H1 (cell line): ENCODE measurements at regions of chr1 and their contacts with region 1.

Region 1: DNA sequence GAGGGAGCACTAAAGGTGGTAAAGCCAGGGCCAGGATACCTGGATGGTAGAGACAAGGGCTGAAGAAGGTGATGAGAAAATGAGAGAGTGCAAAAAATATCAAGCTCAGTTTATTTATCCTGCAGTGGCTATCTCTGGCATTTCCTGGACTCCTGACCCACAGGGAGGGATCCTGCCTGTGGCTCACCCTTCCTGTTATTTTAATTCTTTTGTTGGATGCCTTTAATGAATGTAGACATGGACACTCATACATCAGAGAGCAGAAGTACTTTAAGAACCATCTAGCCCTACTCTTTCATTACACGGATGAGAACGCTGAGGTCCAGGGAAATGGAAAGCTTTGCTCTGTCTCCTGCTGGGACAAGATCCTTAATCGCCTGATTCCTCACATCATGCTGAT is 20.6 kb downstream of the JUN start:
- DNase-seq: no peak
- H3K4me3 ChIP-seq: no peak overlapping the region
- H3K27ac ChIP-seq: no peak overlapping the region
- H3K4me1 ChIP-seq: peaks cover 0 to 5% (median 0%) of the 10 kb centered on the region in 4 experiments; a peak in 1 of 7 replicates
- H3K27me3 ChIP-seq: no peaks in the 10 kb centered on the region
- CTCF ChIP-seq: no peak
- EP300 ChIP-seq: no peak
- POLR2A ChIP-seq: no peak
- RAD21 ChIP-seq: no peak

Region 2: DNA sequence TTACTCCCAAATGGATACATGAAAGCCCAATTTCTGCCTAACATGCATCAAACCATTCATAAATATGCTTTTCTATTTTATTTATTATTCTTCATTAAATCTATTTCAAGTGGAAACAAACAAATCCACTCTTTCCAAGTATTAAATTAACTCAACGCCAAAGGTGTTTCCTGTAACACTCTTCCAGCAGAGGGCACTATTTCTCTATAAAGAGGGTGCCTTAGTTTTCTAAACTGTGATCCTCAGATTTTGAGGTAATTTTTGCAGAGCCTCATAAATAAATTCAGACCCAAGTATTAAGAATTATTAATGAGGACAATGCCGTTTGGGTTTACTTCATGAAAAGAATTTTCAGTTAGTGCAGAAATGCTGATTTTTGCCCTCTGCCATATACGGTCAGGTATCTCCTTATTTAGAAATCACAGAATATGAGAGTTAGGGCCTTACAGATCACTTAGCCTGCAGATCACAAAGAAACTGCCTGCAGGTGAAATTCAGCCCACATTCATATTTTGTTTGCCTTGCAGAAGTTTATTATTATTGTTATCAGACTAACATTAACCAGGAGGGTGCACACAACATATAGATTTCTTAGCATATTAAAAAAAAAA is 23.3 kb before region 1 on chr1:
- CTCF ChIA-PET with region 1: interaction called, 34 read pairs
- POLR2A ChIA-PET with region 1: no interaction called
- DNase-seq: no peak
- H3K4me3 ChIP-seq: no peak overlapping the region
- H3K27ac ChIP-seq: no peak overlapping the region
- H3K4me1 ChIP-seq: no peaks in the 10 kb centered on the region
- H3K27me3 ChIP-seq: no peaks in the 10 kb centered on the region
- CTCF ChIP-seq: peak in 2 of 3 experiments; percentile 43 to 57; a peak in 2 of 4 replicates
- EP300 ChIP-seq: no peak
- POLR2A ChIP-seq: no peak
- RAD21 ChIP-seq: peak; percentile 88 to 89

Region 3: DNA sequence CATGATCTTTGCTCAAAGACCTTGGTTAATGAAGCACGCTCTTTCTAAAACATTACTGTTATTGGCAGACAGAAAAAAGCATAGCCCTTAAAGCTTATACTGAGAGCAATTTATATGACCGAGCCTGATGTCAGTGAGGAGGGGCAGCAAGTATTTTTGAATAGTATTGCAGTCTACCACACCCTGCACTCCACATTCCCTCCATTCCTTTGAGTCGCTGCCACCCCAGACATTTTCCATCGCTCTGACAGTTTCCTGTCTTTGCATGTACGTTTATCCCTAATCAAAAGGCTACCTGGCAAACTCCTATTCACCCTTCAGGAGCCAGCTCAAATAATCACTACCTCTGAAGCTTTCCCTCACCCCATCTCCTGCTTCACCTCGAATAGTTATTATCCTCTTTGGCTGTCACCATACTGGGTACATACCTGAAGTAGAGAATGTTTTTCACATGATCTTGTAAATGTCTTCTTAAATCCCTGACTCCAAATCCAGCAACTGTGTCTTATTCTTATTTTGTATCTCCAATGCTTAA is 26.2 kb after region 1 on chr1:
- CTCF ChIA-PET with region 1: no interaction called
- POLR2A ChIA-PET with region 1: no interaction called
- DNase-seq: no peak
- H3K4me3 ChIP-seq: no peak overlapping the region
- H3K27ac ChIP-seq: no peak overlapping the region
- H3K4me1 ChIP-seq: peaks cover 0 to 6% (median 4%) of the 10 kb centered on the region in 4 experiments; a peak in 3 of 7 replicates
- H3K27me3 ChIP-seq: peaks cover 0 to 11% (median 3%) of the 10 kb centered on the region in 4 experiments; a peak in 5 of 7 replicates
- CTCF ChIP-seq: no peak
- EP300 ChIP-seq: no peak
- POLR2A ChIP-seq: no peak
- RAD21 ChIP-seq: no peak